ENCODE measurements at regions of chr19 and their contacts with region 1.

Region 1: GRCh38 chr19:6125571-6125989 is 9.9 kb upstream of the ACSBG2 start:
- DNase-seq: peak; percentile 90
- H3K4me3 Mint-ChIP-seq: no peak overlapping the region
- H3K27ac Mint-ChIP-seq: no peak overlapping the region
- H3K4me1 Mint-ChIP-seq: peaks cover 5% of the 10 kb centered on the region
- H3K27me3 Mint-ChIP-seq: no peaks in the 10 kb centered on the region
- CTCF ChIP-seq: peak; percentile 96

Region 2: GRCh38 chr19:5934774-5935472 is 190.7 kb before region 1 on chr19:
- CTCF ChIA-PET with region 1: no interaction called
- POLR2A ChIA-PET with region 1: no interaction called
- intact Hi-C with region 1: no loop called
- DNase-seq: no peak
- H3K4me3 Mint-ChIP-seq: no peak overlapping the region
- H3K27ac Mint-ChIP-seq: no peak overlapping the region
- H3K4me1 Mint-ChIP-seq: no peaks in the 10 kb centered on the region
- H3K27me3 Mint-ChIP-seq: no peaks in the 10 kb centered on the region
- CTCF ChIP-seq: no peak

Region 3: DNA sequence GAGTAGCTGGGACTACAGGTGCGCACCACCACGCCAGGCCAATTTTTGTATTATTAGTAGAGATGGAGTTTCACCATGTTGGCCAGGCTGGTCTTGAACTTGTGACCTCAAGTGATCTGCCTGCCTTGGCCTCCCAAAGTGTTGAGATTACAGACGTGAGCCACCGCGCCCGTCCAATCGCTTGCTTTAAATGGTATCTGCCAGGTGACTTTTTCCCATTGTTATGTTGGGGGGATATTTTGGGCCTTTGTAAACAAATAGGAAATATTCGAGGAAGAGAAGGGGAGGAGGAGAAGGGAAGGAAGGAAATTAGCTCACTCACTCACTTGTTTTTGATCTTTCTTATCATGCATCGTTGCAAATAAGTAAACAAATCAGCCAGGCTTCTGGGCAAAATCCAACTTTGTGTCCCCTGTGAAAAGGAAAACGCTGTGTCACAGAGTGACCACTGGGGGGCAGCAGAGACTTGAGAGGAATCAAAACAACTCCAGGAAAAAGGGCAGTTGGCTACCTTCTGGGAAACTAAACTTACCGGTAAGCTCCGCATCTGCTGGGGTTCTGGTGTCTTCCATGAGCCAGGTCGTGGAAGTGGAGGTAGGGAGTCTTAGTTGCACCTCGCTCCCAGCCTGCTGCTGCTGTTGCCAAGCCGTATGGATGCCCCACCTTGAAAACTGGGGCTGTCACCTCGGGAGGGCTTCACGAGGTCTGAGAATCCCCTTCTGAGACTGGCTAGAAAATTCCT is 138.3 kb before region 1 on chr19:
- CTCF ChIA-PET with region 1: interaction called, 28 read pairs
- POLR2A ChIA-PET with region 1: interaction called, 5 read pairs
- intact Hi-C with region 1: loop called (anchors 1 kb)
- DNase-seq: peak; percentile 84
- H3K4me3 Mint-ChIP-seq: peak overlapping the region; percentile 47
- H3K27ac Mint-ChIP-seq: no peak overlapping the region
- H3K4me1 Mint-ChIP-seq: peaks cover 14% of the 10 kb centered on the region
- H3K27me3 Mint-ChIP-seq: no peaks in the 10 kb centered on the region
- CTCF ChIP-seq: peak; percentile 89

Region 4: GRCh38 chr19:6021878-6022569 is 103.6 kb before region 1 on chr19:
- CTCF ChIA-PET with region 1: no interaction called
- POLR2A ChIA-PET with region 1: no interaction called
- intact Hi-C with region 1: no loop called
- DNase-seq: peak; percentile 74
- H3K4me3 Mint-ChIP-seq: no peak overlapping the region
- H3K27ac Mint-ChIP-seq: peak overlapping the region; percentile 24
- H3K4me1 Mint-ChIP-seq: no peaks in the 10 kb centered on the region
- H3K27me3 Mint-ChIP-seq: no peaks in the 10 kb centered on the region
- CTCF ChIP-seq: peak; percentile 49

Region 5: DNA sequence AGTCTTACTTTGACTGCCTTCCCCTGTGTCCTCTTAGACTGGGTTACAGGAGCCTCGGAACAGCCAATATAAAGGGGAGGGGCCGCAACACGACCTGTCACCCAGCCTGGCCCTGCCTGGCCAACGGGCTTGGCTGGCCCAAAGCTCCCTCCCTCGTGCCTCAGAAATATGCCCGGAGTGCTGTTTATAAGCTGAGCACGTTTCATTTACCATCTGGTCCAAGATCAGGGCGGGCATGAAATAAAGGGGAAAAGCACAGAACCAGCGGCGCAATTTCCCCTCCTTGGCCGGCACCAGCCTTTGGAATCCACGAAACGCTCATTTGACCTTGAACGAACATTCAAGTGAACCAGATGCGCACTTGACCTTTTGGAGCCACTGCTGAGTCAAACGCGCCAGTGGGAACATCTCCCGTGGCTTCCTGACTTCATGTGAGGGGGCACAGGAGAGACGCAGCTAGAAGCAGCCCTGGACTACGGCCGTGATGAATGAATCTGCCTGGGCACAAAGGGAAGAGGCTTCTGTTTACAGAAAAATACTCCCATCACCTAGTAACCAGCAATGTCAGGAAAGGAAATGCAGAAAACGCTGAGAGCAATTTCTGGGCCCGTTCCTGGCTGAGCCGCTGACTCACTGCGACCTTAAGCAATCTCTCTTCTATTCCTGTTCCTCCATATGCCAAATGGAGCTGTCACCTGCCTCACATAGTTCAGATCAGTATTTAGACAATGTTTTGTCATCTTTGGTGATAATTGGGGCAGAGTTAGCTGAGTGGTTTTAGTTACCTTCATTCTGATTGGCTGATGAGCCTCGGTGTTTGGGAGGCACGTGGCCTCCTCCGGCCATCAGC is 68.6 kb before region 1 on chr19:
- CTCF ChIA-PET with region 1: interaction called, 23 read pairs
- POLR2A ChIA-PET with region 1: interaction called, 13 read pairs
- intact Hi-C with region 1: loop called (anchors 2 kb)
- DNase-seq: peak; percentile 98
- H3K4me3 Mint-ChIP-seq: peak overlapping the region; percentile 57
- H3K27ac Mint-ChIP-seq: peak overlapping the region; percentile 100
- H3K4me1 Mint-ChIP-seq: peaks cover 40% of the 10 kb centered on the region
- H3K27me3 Mint-ChIP-seq: no peaks in the 10 kb centered on the region
- CTCF ChIP-seq: no peak

Region 6: GRCh38 chr19:6103217-6103644 is 22.3 kb before region 1 on chr19:
- CTCF ChIA-PET with region 1: interaction called, 14 read pairs
- POLR2A ChIA-PET with region 1: interaction called, 3 read pairs
- intact Hi-C with region 1: loop called (anchors 1 kb)
- DNase-seq: peak; percentile 98
- H3K4me3 Mint-ChIP-seq: peak overlapping the region; percentile 24
- H3K27ac Mint-ChIP-seq: peak overlapping the region; percentile 97
- H3K4me1 Mint-ChIP-seq: peaks cover 60% of the 10 kb centered on the region
- H3K27me3 Mint-ChIP-seq: no peaks in the 10 kb centered on the region
- CTCF ChIP-seq: no peak

Region 7: GRCh38 chr19:6297202-6297601 is 171.6 kb after region 1 on chr19:
- CTCF ChIA-PET with region 1: interaction called, 8 read pairs
- POLR2A ChIA-PET with region 1: interaction called, 3 read pairs
- intact Hi-C with region 1: loop called (anchors 1 kb)
- DNase-seq: no peak
- H3K4me3 Mint-ChIP-seq: no peak overlapping the region
- H3K27ac Mint-ChIP-seq: no peak overlapping the region
- H3K4me1 Mint-ChIP-seq: no peaks in the 10 kb centered on the region
- H3K27me3 Mint-ChIP-seq: no peaks in the 10 kb centered on the region
- CTCF ChIP-seq: no peak

Region 8: DNA sequence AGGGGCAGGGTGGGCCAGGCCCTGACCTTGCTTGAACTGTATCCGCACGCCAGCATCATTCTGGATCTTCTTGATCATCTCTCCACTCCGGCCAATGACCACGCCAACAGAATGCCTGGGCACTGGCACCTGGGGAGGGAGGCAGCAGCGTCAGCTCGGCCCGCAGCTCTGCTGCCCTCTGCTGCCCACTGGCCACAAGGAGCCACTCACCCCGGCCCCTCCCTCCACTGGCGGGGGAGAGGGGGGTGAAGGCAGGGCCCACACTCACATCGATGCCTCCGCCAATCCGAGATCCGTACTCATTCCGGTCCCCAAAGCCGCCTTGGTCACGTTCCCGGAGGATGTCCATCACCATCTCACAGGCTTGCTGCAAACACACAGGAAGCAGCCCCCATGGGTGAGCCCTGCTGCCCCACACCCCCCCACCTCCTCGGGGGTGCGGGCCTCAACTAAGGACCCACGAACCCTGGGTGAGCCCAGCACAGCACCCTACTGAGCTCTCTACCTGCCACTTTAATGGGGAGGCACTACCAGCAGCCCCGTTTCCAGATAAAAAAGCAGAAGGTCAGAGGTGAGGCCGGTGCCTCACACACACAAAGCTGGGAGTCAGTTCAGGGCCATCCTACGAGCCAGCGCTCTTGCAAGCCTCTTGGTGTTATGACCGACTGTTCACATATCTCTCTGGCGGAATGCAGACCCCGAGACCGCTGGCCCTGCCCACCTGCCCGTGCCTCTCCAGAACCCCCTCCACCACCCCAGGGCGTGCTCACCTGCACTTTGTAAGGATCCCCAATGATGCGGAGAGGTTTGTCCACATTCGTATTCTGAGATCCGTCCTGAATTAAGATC is 292.4 kb after region 1 on chr19:
- CTCF ChIA-PET with region 1: no interaction called
- POLR2A ChIA-PET with region 1: no interaction called
- intact Hi-C with region 1: loop called (anchors 5 kb)
- DNase-seq: peak; percentile 14
- H3K4me3 Mint-ChIP-seq: no peak overlapping the region
- H3K27ac Mint-ChIP-seq: no peak overlapping the region
- H3K4me1 Mint-ChIP-seq: peaks cover 7% of the 10 kb centered on the region
- H3K27me3 Mint-ChIP-seq: no peaks in the 10 kb centered on the region
- CTCF ChIP-seq: peak; percentile 24

Region 9: DNA sequence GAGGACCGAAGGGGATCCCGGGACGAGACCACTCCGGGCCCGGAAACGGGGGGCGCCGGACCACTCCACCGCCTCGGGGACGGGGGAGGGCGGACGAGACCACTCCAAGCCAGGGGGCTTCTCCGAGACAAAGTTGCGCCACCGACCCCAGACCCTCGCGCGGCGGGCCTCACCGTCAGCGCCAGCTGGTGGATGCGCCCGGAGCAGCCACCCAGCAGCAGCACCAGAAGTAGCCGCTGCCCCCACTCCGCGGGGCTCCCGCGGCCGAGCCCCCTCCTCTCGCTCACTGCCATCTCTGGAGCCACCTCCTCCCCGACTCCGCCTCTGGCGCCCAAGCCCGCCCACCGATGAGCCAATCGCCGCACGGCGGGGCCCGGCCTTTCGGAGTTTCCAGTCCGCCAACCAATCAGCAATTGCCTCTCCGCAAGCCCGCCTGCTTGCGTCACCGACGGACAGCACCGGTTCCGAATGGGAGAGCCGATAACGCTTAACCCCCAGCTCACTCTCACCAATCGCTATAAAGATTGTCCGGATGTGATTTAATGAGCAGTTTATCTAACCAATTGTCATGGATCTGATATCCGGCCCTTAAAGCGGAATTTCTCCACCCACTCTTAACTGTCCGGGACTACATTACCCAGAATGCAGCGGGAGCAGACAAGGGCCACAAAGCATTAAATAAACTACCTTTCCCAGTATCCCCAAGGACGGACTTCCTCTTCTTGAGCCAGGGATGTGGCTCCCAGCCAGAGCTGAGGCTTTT is 611.9 kb after region 1 on chr19 and contains the start of gene GPR108:
- CTCF ChIA-PET with region 1: no interaction called
- POLR2A ChIA-PET with region 1: interaction called, 3 read pairs
- intact Hi-C with region 1: loop called (anchors 5 kb)
- DNase-seq: peak; percentile 100
- H3K4me3 Mint-ChIP-seq: peak within 1 kb of the TSS; percentile 88
- H3K27ac Mint-ChIP-seq: peak within 1 kb of the TSS; percentile 83
- H3K4me1 Mint-ChIP-seq: peaks cover 27% of the 10 kb centered on the region
- H3K27me3 Mint-ChIP-seq: no peaks in the 10 kb centered on the region
- CTCF ChIP-seq: no peak
- total RNA-seq, gene GPR108: 115 and 124 TPM in 2 replicates

Measured in MCF 10A (cell line).